Sciatic nerve (tissue), 2 donors: ENCODE measurements at regions of chr15 and their contacts with region 1.

Region 1: GRCh38 chr15:49492824-49493223 is 69.8 kb downstream of the FGF7 start:
- DNase-seq: no peak
- ATAC-seq: peak; percentile 79

Region 2: GRCh38 chr15:49286649-49287404 is 206.0 kb before region 1 on chr15:
- intact Hi-C with region 1: no loop called
- DNase-seq: no peak
- ATAC-seq: peak; percentile 77

Region 3: DNA sequence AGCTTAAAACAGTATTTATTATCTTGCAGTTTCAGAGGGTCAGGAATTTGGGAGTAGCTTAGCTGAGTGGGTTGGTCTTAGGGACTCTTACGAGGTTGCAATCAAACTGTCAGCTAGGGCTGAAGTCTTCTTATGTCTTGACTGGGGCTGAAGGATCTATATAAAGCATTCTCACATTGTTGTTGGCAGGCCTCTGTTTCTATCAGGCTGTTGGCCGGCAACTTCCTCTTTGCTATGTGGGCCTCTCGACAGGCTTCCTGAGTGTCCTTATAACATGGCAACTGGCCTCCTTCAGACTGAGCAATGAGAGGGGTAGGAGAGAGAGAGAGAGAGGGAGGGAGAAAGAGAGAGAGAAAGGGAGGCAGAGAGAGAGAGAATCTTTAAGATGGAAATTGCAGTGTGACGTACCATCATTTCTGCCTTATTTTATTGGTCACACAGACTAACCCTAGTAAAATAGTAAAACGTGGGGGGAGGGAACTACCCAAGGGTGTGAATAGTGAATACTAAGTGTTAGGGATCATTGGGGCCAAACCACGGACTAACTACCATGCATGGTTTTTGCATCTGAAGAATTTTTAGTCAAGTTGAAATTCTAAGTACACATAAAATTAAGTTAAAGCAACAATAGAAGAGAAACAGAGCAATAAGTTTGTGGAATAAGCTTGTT is 53.7 kb before region 1 on chr15:
- intact Hi-C with region 1: loop called (anchors 10 kb)
- DNase-seq: peak; percentile 57
- ATAC-seq: peak; percentile 69